Calu3 (cell line): ENCODE measurements at regions of chr11 and their contacts with region 1.

Region 1: DNA sequence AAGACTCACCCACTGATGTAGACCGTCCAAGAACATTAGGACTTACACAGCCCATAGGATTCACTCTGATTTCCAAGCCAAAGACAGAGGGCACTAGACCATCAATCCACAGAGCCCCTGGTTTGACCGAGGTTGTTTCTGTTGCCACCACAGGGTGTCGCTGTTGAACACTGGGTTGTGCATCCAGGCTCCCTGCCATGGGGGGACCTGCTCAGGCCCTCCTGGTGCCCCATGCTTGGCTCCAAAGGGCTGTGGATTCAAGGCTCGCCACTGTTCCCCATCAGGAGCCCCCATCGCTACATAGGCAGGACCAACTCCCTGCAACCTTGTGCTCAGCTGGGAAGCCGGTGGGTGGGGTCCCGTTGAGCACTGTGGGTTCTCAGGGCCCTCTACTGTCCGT is 128.0 kb upstream of the ANO1 start:
- DNase-seq: peak; percentile 69
- H3K4me3 Mint-ChIP-seq: no peak overlapping the region
- H3K27ac Mint-ChIP-seq: peak overlapping the region; percentile 98
- H3K4me1 Mint-ChIP-seq: peaks cover 22% of the 10 kb centered on the region
- H3K27me3 Mint-ChIP-seq: no peaks in the 10 kb centered on the region
- CTCF ChIP-seq: peak; percentile 67

Region 2: GRCh38 chr11:69854719-69855118 is 95.4 kb before region 1 on chr11:
- CTCF ChIA-PET with region 1: no interaction called
- intact Hi-C with region 1: no loop called
- DNase-seq: peak; percentile 33
- H3K4me3 Mint-ChIP-seq: no peak overlapping the region
- H3K27ac Mint-ChIP-seq: no peak overlapping the region
- H3K4me1 Mint-ChIP-seq: peaks cover 19% of the 10 kb centered on the region
- H3K27me3 Mint-ChIP-seq: peaks cover 12% of the 10 kb centered on the region
- CTCF ChIP-seq: no peak

Region 3: DNA sequence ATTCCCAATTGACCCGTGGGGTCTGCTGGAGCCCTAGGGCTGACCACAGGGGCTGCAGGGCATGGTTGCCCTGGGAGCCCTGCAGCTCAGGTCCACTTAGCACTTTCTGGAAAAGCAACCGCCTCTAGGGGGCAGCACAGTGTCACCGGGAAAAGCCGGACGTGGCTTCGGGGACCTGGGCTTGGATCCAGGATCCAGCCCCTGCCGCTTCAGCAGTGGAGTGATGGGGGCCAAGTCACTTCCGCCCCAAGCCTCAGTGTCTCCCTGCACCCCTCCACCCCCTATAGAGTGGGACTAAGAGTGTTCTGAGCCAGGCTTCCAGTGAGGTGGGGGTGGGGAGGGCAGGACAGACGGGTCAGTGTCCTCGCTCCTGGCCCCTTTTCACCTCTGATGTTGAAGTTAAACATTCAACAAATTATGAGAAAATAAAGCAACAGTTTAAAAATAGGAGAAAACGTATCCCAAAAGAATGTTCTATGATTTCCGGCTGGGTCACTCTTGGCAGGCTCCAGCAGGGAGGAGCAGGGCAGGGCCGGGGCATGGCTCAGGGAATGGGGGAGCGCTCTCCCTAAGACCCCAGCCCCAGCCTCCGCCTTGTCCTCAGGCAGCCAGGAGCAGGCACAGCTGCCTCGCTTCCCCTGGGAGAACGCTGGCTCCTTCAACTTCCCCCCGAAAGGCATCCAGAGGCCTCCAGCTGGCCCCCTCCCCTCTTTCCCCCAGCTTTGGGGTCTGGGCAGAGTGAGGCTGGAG is 34.4 kb before region 1 on chr11:
- CTCF ChIA-PET with region 1: interaction called, 10 read pairs
- intact Hi-C with region 1: loop called (anchors 2 kb)
- DNase-seq: peak; percentile 92
- H3K4me3 Mint-ChIP-seq: peak overlapping the region; percentile 1
- H3K27ac Mint-ChIP-seq: peak overlapping the region; percentile 28
- H3K4me1 Mint-ChIP-seq: peaks cover 59% of the 10 kb centered on the region
- H3K27me3 Mint-ChIP-seq: peaks cover 18% of the 10 kb centered on the region
- CTCF ChIP-seq: peak; percentile 91

Region 4: GRCh38 chr11:70082829-70083228 is 132.7 kb after region 1 on chr11:
- CTCF ChIA-PET with region 1: interaction called, 6 read pairs
- intact Hi-C with region 1: loop called (anchors 10 kb)
- DNase-seq: peak; percentile 28
- H3K4me3 Mint-ChIP-seq: no peak overlapping the region
- H3K27ac Mint-ChIP-seq: no peak overlapping the region
- H3K4me1 Mint-ChIP-seq: peaks cover 19% of the 10 kb centered on the region
- H3K27me3 Mint-ChIP-seq: no peaks in the 10 kb centered on the region
- CTCF ChIP-seq: peak; percentile 37